ENCODE measurements at regions of chr16 and their contacts with region 1.

Region 1: DNA sequence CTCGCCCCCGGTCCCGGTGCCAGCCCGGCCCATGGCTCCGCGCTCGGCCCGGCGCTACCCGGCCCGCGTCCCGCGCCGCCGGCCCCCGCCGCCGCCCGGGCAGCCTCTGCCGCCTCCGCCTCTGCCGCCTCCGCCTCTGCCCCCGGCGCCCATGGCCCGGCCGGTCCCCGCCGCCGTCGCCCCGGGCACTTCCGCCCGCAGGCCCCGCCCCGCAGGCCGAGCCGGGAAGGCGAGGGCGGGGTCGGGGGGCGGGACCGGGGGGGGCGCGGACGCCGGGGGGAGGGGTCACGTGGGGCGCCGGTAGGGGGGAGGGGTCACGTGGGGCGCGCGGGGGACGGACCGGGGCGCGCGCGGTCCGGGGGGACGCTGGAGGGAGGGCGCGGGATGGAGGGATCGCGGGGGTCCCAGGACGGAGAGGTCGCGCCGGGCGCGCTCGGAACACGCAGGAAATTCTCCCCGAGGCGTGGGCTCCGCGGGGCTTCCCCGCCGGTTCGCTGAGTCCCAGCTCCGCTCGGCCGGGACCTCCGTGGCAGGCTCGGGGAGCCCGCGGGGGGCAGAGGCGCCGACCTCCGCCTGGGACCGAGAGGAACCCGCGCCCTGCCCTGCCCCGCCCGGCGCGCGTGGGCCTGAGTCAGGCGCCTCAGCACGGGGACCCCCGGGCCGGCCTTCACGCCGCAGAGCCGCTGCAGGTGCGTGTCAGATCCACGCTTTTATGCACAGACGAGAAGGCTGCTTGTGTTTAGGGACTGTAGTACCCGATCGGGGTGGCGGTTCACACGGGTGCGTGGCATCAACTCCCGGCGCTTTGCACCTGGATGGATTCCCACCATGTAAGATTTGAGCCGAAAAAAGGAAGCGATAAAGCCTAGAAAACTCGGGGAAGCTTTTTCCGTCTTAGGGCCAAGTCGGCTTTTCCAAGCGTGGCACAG is at the start of gene PGAP6:
- DNase-seq: peak in 8 of 9 experiments; percentile 50 to 85 (median 70)
- ATAC-seq: peak; percentile 57
- H3K4me3 ChIP-seq: peak within 1 kb of the TSS; percentile 63 to 74
- H3K4me3 Mint-ChIP-seq: peak within 1 kb of the TSS; percentile 93
- H3K27ac ChIP-seq: peak within 1 kb of the TSS in 1 of 2 experiments; percentile 68
- H3K27ac Mint-ChIP-seq: peak within 1 kb of the TSS; percentile 86
- H3K4me1 ChIP-seq: peaks cover 34% of the 10 kb centered on the region
- H3K4me1 Mint-ChIP-seq: peaks cover 29% of the 10 kb centered on the region
- H3K27me3 ChIP-seq: no peaks in the 10 kb centered on the region
- H3K27me3 Mint-ChIP-seq: no peaks in the 10 kb centered on the region
- CTCF ChIP-seq: no peak
- total RNA-seq, gene PGAP6: 57.9 to 60.8 TPM

Region 2: DNA sequence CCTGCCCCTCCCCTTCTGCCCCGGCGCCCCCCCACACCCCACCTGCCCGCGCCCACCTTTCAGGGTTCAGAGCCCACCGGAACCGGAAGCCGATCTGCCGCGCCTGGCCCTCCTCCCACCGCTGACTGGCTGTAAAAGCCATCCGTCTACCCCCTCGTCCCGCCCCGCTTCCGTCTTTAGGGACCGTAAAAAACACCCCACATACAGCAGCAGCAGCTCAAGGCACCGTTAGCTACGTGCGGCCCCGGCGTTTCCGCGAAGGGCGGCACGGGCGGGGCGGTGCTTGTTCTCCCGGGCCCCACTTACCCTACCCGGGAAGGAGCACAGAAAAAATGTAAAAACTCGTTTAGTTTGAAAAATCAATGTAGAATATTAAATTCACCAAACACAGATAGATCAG is 11.6 kb before region 1 on chr16 and contains the start of gene MRPL28:
- CTCF ChIA-PET with region 1: interaction called, 7 read pairs
- POLR2A ChIA-PET with region 1: interaction called, 25 read pairs
- intact Hi-C with region 1: loop called in 1 of 2 experiments (anchors 1 kb)
- DNase-seq: peak; percentile 86 to 97 (median 93)
- ATAC-seq: peak; percentile 99
- H3K4me3 ChIP-seq: peak within 1 kb of the TSS; percentile 15 to 20
- H3K4me3 Mint-ChIP-seq: peak within 1 kb of the TSS; percentile 84
- H3K27ac ChIP-seq: peak within 1 kb of the TSS; percentile 0 to 77
- H3K27ac Mint-ChIP-seq: peak within 1 kb of the TSS; percentile 92
- H3K4me1 ChIP-seq: peaks cover 14% of the 10 kb centered on the region
- H3K4me1 Mint-ChIP-seq: peaks cover 17% of the 10 kb centered on the region
- H3K27me3 ChIP-seq: no peaks in the 10 kb centered on the region
- H3K27me3 Mint-ChIP-seq: no peaks in the 10 kb centered on the region
- CTCF ChIP-seq: no peak
- total RNA-seq, gene MRPL28: 16.7 to 17.4 TPM

Region 3: GRCh38 chr16:425082-425718 is 43.1 kb after region 1 on chr16 and contains the start of gene RAB11FIP3:
- CTCF ChIA-PET with region 1: no interaction called
- POLR2A ChIA-PET with region 1: no interaction called
- intact Hi-C with region 1: loop called in 1 of 2 experiments (anchors 5 kb)
- DNase-seq: peak; percentile 66 to 92 (median 83)
- ATAC-seq: peak; percentile 89
- H3K4me3 ChIP-seq: peak within 1 kb of the TSS; percentile 78 to 86
- H3K4me3 Mint-ChIP-seq: peak within 1 kb of the TSS; percentile 90
- H3K27ac ChIP-seq: peak within 1 kb of the TSS; percentile 81 to 93
- H3K27ac Mint-ChIP-seq: peak within 1 kb of the TSS; percentile 96
- H3K4me1 ChIP-seq: peaks cover 21% of the 10 kb centered on the region
- H3K4me1 Mint-ChIP-seq: peaks cover 36% of the 10 kb centered on the region
- H3K27me3 ChIP-seq: peaks cover 0 to 3% of the 10 kb centered on the region in 2 experiments
- H3K27me3 Mint-ChIP-seq: peaks cover 3% of the 10 kb centered on the region
- CTCF ChIP-seq: peak; percentile 40
- total RNA-seq, gene RAB11FIP3: 26.4 to 27.5 TPM

Region 4: DNA sequence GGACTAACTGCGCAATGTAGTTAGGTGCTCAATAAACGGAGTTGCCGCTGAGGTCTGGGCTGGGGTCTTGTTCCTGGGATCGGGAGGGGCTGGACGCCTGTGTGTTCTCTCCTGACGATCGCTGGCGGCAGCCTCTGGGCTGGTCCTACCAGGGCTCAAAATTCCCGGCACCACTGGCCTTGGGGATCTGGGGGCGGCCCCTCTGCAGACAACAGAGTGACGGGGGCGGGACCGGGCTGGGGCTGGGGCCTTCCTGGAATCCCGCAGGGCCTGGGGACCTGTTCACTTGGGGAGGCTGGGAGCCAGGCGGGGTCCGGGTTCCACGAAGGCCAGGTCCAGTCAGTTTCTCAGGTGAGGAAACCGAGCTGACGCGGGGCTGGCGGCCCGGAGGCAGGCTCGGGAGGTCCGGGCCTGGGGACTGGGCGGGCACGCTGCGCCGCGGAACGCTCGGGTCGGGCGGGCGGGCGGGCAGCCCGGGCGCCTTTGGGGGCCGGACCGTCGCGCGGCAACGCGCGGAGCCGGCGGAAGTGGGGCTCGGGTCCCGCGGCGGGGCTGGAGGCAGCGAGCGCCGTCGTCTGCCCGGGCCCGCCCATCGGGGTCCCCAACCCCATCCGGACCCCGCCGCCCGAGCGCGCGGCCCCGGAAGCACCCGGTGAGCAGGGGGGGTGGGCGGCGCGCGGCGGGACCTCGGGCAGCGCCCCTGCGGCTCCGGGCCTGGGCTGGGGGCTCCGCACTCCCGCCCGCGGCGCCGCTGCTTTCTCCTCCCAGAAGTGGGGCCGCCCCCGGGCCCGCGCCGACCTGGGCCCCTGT is 187.6 kb after region 1 on chr16 and contains the start of gene PIGQ:
- CTCF ChIA-PET with region 1: no interaction called
- POLR2A ChIA-PET with region 1: interaction called, 3 read pairs
- intact Hi-C with region 1: loop called in 1 of 2 experiments (anchors 5 kb)
- DNase-seq: peak; percentile 40 to 81 (median 59)
- ATAC-seq: peak; percentile 77
- H3K4me3 ChIP-seq: peak within 1 kb of the TSS; percentile 66 to 84
- H3K4me3 Mint-ChIP-seq: peak within 1 kb of the TSS; percentile 83
- H3K27ac ChIP-seq: peak within 1 kb of the TSS; percentile 65 to 82
- H3K27ac Mint-ChIP-seq: peak within 1 kb of the TSS; percentile 89
- H3K4me1 ChIP-seq: peaks cover 44% of the 10 kb centered on the region
- H3K4me1 Mint-ChIP-seq: peaks cover 32% of the 10 kb centered on the region
- H3K27me3 ChIP-seq: no peaks in the 10 kb centered on the region
- H3K27me3 Mint-ChIP-seq: no peaks in the 10 kb centered on the region
- CTCF ChIP-seq: no peak
- total RNA-seq, gene PIGQ: 25.9 to 31.0 TPM

Region 5: DNA sequence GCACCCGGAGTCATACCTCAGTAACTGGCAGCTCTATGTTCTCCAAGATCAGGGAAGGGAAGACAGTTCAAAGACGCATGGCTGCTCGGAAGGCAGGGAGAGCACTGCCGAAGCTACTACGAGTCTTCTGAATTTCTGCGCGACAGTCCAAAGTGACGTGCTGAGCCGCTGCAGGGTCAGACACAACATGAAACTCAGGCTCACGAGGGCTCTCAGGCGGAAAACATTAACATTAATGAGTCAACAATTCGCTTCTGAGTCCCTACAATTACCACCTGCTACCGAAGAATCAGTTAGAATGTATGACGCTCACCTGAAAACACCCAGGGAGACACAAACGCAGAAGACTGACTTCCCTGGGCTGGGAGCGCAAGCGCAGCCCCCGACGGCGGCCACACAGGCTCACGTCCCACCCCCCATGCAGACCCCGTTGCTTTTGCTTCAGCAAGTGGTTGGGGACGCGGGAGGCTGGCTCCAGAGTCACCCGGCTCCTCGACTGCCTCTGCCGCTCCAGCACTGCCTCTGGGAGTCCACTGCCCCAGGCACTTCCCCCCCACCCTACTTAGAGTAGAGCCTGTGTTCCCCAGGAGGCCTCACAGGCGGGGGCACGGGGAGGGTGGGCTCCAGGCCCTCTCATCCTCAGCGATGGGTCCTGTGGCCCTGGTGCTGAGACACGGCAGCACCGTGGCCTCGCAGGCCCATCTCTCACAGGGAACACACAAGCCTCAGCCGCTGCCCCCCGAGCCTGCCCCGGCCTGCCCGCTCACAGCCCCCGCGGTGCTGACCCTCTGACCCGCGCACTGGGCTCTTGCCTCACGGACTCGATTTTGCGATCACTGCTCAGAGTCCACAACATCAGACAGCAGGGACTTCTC is 549.8 kb after region 1 on chr16:
- CTCF ChIA-PET with region 1: no interaction called
- POLR2A ChIA-PET with region 1: no interaction called
- intact Hi-C with region 1: no loop called
- DNase-seq: no peak
- ATAC-seq: no peak
- H3K4me3 ChIP-seq: no peak overlapping the region
- H3K4me3 Mint-ChIP-seq: no peak overlapping the region
- H3K27ac ChIP-seq: no peak overlapping the region
- H3K27ac Mint-ChIP-seq: no peak overlapping the region
- H3K4me1 ChIP-seq: no peaks in the 10 kb centered on the region
- H3K4me1 Mint-ChIP-seq: peaks cover 7% of the 10 kb centered on the region
- H3K27me3 ChIP-seq: no peaks in the 10 kb centered on the region
- H3K27me3 Mint-ChIP-seq: no peaks in the 10 kb centered on the region
- CTCF ChIP-seq: no peak

Measured in CD8-positive, alpha-beta T cell (primary cell).